A549 (cell line): ENCODE measurements at regions of chr2 and their contacts with region 1.

Region 1: DNA sequence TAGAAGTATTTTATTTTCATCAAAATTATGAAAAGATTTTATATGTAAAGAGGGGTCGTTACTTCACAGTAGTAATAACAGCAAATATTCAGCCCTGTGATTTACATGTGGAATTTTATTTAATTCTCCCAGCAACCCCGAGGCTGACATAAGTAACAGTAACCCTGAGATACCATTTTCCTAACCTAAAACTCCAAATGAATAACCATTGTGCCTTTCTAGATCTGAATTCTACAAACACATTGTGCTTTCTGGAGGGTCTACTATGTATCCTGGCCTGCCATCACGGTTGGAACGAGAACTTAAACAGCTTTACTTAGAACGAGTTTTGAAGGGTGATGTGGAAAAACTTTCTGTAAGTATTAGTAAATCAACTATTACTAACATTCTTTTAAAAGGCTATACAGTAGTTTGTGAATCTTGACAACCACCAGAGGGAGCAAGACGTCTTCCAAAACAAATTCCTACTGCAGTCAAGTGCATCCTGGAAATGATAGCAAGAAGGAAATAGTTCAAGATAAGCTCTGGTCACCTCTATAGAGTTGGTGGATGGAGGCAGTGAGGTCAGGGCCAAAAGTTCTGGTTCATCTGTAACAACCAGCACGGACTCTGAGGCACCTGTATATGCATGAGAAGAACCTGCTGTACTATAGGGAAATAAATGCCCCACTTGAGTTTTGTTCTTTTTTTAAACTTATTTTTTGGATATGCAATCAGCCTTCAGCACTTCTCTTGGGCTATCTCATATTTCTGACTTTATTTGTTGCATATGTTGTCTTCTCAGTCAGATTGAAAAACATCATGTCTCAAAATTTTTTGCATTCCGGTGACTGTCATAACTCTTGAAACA is 37.4 kb downstream of the ACTR2 start:
- DNase-seq: peak; percentile 46 to 92
- ATAC-seq: peak; percentile 86 to 91
- H3K4me3 ChIP-seq: no peak overlapping the region
- H3K27ac ChIP-seq: no peak overlapping the region
- H3K4me1 ChIP-seq: peaks cover 21% of the 10 kb centered on the region; the same call in 2 of the 3 replicates
- CTCF ChIP-seq: peak; percentile 97
- EP300 ChIP-seq: no peak
- POLR2A ChIP-seq: no peak
- RAD21 ChIP-seq: peak; percentile 95 to 96

Region 2: DNA sequence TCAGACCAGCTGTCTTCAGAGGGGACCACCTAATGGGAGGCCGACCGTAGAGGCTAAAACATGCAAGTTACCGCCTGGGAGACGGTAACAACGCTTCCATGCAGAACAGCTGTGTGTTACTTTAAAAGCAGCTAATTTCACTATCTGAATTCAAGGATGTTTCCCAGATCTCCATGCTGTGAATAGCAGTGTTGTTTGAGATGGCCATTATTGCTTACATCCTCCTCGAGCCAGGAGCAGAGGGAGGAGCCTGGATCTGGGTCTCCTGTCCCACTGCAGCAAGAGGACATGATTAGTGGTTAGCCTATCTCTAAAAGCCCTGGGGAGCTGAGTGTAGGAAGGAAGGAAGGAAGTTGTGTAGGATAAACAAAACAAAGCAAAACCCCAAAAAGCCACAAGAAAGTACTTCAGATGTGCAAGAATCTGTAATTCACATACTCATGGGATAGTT is 13.5 kb after region 1 on chr2:
- CTCF ChIA-PET with region 1: interaction called, 26 read pairs
- POLR2A ChIA-PET with region 1: no interaction called
- DNase-seq: no peak
- ATAC-seq: peak in 1 of 2 experiments; percentile 19; a peak in 3 of 6 replicates
- H3K4me3 ChIP-seq: no peak overlapping the region
- H3K27ac ChIP-seq: no peak overlapping the region
- H3K4me1 ChIP-seq: no peaks in the 10 kb centered on the region
- CTCF ChIP-seq: no peak
- EP300 ChIP-seq: no peak
- POLR2A ChIP-seq: no peak
- RAD21 ChIP-seq: no peak

Region 3: DNA sequence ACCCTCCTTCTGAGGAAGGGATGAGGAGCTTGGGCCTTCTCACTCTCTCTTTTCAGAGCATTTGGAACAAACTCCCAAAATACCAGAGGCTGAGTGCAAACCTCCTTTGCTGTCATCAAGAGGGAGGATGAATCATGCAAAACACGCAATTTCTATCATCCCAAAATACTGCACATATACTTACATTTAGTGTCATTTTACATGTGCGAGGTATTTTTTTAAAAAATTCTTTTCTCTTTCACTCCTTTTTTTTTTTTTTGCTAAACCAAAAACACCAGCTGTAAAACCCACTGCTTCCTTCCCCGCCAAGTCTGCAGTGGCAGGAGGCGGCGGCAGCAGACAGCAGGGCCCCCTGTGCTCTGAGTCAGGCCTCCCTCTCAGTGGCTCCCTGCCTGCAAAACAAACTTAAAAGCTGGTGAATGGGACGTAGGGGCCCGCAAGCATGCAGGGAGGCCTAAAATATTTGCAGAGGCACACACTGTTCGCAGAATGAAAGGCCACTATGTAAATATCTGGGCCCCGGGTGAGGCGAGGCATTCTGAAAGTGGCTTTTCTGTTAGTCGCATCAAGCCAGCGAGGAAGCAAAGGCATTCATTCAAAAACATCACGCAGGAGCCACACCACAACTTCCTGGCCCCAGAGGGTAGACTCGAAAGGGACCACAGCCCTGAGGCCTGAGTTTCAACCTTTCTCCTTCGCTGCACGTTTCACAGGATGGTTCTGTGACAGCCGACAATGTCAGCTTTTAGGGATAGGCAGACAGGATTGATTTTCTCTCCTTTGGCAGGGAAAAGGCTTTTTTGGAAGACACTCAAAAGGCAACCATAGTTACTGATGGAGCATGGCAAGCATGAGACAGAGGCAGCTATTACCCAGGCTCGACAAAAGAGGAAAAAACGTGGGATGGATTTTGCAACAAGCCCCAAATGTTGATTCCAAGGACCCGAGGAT is 36.0 kb after region 1 on chr2:
- CTCF ChIA-PET with region 1: interaction called, 21 read pairs
- POLR2A ChIA-PET with region 1: no interaction called
- DNase-seq: peak; percentile 65 to 70
- ATAC-seq: peak; percentile 86 to 90
- H3K4me3 ChIP-seq: no peak overlapping the region
- H3K27ac ChIP-seq: peak overlapping the region; percentile 71 to 82
- H3K4me1 ChIP-seq: peaks cover 38% of the 10 kb centered on the region
- CTCF ChIP-seq: no peak
- EP300 ChIP-seq: no peak
- POLR2A ChIP-seq: no peak
- RAD21 ChIP-seq: 0 out of 5 replicates have a peak, but pooled peaks of 1 of the 2 experiments have one; percentile 20

Region 4: DNA sequence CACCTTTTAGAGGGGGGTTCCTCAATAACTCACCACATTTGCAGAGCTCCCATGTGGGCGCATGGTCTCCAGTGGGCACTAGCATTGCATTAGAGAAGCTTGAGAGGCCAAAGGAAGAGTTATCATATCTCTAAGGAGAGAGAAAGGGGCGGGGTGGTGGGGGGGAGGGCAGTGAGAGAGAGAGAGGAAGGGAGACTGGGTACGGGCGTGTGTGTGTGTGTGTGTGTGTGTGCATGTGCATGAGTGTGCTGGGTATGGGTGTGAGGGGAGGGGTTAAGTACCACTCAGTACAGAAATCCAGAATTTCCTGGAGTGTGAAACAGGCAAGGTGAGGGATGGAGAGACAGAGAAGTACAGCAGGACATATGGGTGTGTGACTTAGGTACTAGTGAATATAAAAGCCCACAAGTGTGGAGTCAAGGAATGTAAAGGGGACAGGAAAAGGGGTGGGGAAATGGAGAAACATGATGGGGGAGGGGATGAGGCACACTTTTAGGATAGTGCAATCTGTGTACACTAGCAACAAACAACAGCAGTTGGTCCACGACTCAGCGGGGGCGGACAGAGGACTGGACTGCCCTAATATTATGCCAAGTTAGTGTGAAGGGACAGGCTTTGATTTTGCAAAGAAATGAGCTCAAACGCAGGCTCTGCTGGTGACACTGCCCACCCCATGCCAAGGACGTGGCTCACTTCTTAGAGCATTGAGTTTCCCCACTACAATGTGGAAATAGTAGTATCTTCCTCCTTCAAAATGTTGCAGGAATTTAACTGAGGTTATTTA is 76.0 kb after region 1 on chr2:
- CTCF ChIA-PET with region 1: interaction called, 10 read pairs
- POLR2A ChIA-PET with region 1: interaction called, 3 read pairs
- DNase-seq: peak in 1 of 2 experiments; percentile 32
- ATAC-seq: peak; percentile 44 to 64; a peak in 4 of 6 replicates
- H3K4me3 ChIP-seq: no peak overlapping the region
- H3K27ac ChIP-seq: peak overlapping the region in 1 of 2 experiments; percentile 64; a peak in 4 of 6 replicates
- H3K4me1 ChIP-seq: peaks cover 31% of the 10 kb centered on the region
- CTCF ChIP-seq: no peak
- EP300 ChIP-seq: no peak
- POLR2A ChIP-seq: no peak
- RAD21 ChIP-seq: no peak

Region 5: DNA sequence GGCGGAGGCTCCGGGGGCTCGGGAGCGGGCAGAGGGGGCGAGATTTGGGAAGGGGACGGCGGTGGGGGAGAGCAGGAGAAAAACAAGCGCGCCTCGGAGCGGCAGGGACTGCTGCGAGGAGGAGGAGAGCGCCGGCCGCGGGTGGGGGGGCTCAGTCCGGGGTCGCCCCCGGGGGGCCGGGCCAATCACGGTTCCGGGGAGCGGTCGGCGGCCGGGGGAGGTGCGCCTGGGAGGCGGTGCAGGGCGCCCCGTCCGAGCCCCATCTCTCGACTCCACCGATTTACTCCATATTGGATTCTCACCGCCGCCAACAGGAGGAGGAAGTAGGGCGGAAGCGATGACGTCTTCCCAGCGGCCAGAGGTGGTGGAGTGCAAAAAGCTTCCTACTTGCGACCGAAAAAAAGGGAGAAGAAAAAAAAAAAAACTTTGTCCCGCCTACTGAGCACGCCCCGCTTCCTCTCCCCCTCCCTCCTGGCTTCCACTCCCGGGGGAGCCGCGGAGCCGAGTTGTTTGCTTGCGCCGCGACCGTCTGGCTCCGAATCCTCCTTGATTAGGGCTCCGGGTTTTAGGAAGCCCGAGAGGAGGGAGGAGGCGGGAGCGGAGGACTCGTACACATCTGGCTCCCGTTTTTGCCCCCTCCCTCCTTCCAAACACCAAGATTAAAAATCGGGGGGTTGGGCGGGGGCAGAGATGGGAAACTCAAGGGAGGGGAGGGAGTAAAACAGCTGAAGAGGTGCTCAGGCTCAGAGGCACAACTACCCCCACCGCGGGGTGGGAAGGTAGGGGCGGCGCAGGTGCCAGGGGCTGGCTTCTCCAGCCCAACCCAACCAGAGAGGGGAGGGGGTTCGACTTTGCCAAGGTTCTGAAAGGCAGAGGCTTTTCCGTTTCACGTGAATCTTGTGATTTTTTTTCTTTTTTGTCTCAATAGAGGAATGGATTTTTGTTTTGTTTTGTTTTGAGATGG is 167.5 kb after region 1 on chr2 and contains the start of gene SPRED2:
- CTCF ChIA-PET with region 1: interaction called, 11 read pairs
- POLR2A ChIA-PET with region 1: interaction called, 3 read pairs
- DNase-seq: peak; percentile 81 to 96
- ATAC-seq: peak; percentile 57 to 78
- H3K4me3 ChIP-seq: peak within 1 kb of the TSS; percentile 96
- H3K27ac ChIP-seq: peak within 1 kb of the TSS; percentile 83 to 94
- H3K4me1 ChIP-seq: peaks cover 25% of the 10 kb centered on the region
- CTCF ChIP-seq: 0 out of 3 replicates have a peak, but pooled peaks have one; percentile 9
- EP300 ChIP-seq: 0 out of 5 replicates have a peak, but pooled peaks of 1 of the 2 experiments have one; percentile 14
- POLR2A ChIP-seq: peak; percentile 41
- RAD21 ChIP-seq: peak in 1 of 2 experiments; percentile 33; a peak in 3 of 5 replicates
- polyA plus RNA-seq, gene SPRED2: 28.1 and 29.3 TPM in 2 replicates

Region 6: DNA sequence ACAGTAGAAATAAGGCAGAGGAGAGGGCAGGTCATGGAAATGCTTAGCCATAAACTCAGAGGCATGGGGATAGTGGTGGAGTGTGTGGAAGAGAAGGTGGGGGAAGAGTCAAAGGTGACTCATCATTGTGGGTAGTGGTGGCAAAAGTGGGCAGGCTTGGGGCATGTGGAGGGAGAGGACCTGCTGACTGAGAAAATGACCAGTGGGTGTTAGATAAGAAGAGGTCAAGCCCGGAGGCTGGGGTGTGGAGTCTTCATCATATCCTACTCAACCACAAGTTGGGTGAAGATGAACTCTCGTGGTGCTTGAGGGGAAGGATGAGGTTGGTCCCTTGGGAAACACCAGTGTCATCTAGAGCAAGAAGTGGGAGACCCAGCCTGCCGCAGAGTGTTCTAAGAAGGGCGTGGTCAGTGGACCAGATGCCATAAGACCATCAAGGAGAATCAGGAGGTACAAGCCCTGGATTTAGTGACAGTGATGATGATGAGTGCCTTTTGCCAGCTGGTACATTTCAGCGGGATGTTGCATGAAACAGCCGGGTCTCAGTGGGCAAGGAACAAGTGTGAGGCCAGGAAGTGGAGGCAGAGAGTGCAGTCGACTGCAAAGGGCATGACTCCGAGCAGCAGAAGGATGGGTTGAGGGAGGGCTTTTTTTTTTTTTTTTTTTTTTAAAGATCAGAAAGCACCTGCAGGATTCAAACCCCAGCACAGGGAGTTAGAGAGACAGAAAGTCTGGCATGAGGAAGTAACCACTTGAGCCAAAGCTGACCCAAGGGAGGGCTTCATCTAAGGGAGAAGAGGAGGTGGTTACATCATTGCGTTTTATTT is 289.9 kb after region 1 on chr2:
- CTCF ChIA-PET with region 1: interaction called, 21 read pairs
- POLR2A ChIA-PET with region 1: interaction called, 4 read pairs
- DNase-seq: no peak
- ATAC-seq: no peak
- H3K4me3 ChIP-seq: no peak overlapping the region
- H3K27ac ChIP-seq: no peak overlapping the region
- H3K4me1 ChIP-seq: no peaks in the 10 kb centered on the region
- CTCF ChIP-seq: no peak
- EP300 ChIP-seq: no peak
- POLR2A ChIP-seq: no peak
- RAD21 ChIP-seq: no peak

Region 7: GRCh38 chr2:65658881-65659280 is 393.8 kb after region 1 on chr2:
- CTCF ChIA-PET with region 1: no interaction called
- POLR2A ChIA-PET with region 1: no interaction called
- DNase-seq: no peak
- ATAC-seq: peak in 1 of 2 experiments; percentile 29; a peak in 2 of 6 replicates
- H3K4me3 ChIP-seq: no peak overlapping the region
- H3K27ac ChIP-seq: no peak overlapping the region
- H3K4me1 ChIP-seq: no peaks in the 10 kb centered on the region
- CTCF ChIP-seq: no peak
- EP300 ChIP-seq: no peak
- POLR2A ChIP-seq: no peak
- RAD21 ChIP-seq: no peak